Naive thymus-derived CD8-positive, alpha-beta T cell (primary cell): ENCODE measurements at regions of chr20 and their contacts with region 1.

Region 1: DNA sequence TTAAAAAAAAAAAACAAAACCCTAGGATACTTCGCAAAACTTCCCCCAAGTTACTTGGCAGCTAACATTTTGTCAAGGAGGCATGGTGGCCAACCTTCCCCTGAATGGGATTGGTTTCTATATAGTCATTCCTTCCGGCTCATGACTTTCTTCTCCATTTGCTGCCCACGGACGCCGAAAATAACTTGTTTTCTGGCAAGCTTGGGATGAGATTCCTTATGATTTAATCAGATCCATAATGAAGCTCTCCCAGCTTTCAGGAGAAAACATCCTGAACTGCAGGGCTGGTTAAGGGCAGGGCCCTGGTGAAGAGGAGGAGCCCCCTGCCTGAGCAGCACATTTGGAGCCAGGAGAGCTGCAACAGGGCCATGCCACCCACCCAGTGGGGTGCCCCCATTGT is 49.9 kb downstream of the PPP1R16B start:
- DNase-seq: no peak
- ATAC-seq: no peak
- H3K4me3 Mint-ChIP-seq: no peak overlapping the region
- H3K27ac Mint-ChIP-seq: peak overlapping the region in 4 of 10 donors; percentile 11 to 55 (median 24)
- H3K4me1 Mint-ChIP-seq: peaks cover 32 to 77% (median 58%) of the 10 kb centered on the region in 4 donors
- H3K27me3 Mint-ChIP-seq: no peaks in the 10 kb centered on the region

Region 2: DNA sequence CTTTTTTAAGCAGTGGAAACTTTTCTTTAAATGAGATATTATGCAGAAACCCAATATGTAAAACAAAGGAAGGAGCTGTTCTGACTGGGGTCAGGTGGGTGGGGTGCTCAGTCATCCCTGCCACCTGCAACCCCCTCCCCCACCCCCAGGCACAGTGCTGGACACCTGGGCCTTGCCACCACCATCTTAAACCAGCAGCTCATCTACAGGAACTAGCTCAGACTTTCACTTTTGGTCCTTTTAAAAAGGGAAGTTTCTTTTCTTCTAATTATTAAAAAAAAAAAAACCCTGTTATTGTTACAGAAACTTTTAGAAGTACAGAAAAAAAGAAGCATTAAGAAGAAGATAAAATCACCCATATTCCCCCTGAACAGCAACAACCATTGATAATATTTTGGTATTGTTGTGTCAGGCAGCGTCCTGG is 12.8 kb before region 1 on chr20:
- POLR2A ChIA-PET with region 1: interaction called, 15 read pairs
- DNase-seq: peak in 2 of 10 donors; percentile 15 to 49
- ATAC-seq: peak; percentile 59 to 64
- H3K4me3 Mint-ChIP-seq: peak overlapping the region; percentile 12 to 75 (median 60)
- H3K27ac Mint-ChIP-seq: peak overlapping the region; percentile 78 to 98 (median 90)
- H3K4me1 Mint-ChIP-seq: peaks cover 24 to 88% (median 70%) of the 10 kb centered on the region in 4 donors
- H3K27me3 Mint-ChIP-seq: no peaks in the 10 kb centered on the region